ENCODE measurements at regions of chr16 and their contacts with region 1.

Region 1: DNA sequence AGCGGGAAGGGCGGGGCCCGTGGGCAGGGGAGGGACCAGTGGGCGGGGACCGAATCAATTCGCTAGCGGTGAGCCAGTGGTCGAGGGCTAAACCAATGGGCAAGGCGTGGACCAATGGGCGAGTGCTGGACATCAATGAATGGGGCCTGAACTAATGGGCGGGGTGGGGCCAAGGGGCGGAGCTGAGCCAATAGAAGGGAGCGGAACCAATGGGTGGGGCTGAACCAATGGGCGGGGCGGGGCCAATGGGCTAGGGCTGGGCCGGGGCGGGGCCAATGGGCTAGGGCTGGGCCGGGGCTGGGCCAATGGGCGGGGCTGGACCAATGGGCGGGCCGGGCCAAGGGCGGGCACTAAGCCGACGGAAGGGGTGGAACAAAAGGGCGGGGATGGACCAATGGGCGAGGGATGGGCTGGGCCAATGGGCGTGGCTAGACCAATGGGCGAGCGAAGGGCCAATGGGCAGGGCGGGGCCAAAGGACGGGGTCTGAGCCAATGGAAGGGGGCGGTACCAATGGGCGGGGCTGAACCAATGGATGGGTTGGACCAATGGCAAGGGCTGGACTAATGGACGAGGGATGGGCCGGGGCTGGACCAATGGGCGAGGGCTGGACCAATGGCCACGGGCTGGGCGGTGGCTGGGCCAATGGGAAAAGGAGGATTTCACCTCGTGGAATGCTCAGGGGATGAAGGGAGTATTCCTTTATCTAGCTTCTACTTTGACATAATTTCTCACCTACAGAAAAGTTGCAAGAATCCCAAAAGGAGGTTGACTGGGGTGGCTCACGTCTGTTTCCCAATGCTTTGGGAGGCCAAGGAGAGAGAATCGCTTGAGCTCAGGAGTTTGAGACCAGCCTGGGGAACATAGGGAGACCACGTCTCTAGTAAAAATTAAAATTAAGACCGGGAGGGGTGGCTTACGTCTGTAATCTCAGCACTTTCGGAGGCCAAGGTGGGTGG is 6.0 kb upstream of the FLYWCH1 start:
- DNase-seq: peak; percentile 100
- ATAC-seq: peak; percentile 81
- H3K4me3 Mint-ChIP-seq: peak overlapping the region; percentile 94
- H3K27ac Mint-ChIP-seq: peak overlapping the region; percentile 8
- H3K4me1 Mint-ChIP-seq: peaks cover 19% of the 10 kb centered on the region
- H3K27me3 Mint-ChIP-seq: no peaks in the 10 kb centered on the region

Region 2: DNA sequence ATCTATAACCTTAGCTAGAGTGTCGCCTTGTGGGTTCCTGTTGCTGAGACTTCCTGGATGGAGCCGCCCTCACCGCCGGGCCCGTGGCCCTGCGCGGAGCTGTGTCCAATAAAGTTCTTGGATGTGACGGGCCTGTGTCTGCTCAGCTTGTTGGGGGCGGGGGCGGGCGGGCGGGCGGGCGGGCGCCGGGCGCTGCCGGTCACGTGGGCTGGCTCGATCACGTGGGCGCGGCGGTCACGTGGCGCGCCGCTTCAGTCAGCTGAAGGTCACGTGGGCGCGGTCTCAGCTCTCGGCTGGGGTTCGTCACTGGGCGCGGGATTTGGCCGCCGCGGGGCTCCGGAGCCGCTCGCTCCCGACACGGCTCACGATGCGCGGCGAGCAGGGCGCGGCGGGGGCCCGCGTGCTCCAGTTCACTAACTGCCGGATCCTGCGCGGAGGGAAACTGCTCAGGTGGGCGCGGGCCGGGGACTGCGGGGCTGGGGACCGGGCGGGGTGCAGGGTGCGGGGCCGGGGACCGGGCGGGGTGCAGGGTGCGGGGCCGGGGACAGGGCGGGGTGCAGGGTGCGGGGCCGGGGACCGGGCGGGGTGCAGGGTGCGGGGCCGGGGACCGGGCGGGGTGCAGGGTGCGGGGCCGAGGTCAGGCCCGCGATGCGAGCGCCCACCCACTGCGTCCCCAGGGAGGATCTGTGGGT is 385.5 kb before region 1 on chr16 and contains the start of gene AMDHD2:
- CTCF ChIA-PET with region 1: no interaction called
- POLR2A ChIA-PET with region 1: no interaction called
- intact Hi-C with region 1: no loop called
- DNase-seq: peak; percentile 95
- ATAC-seq: peak; percentile 77
- H3K4me3 Mint-ChIP-seq: peak within 1 kb of the TSS; percentile 80
- H3K27ac Mint-ChIP-seq: peak within 1 kb of the TSS; percentile 89
- H3K4me1 Mint-ChIP-seq: peaks cover 52% of the 10 kb centered on the region
- H3K27me3 Mint-ChIP-seq: no peaks in the 10 kb centered on the region
- total RNA-seq, gene AMDHD2: 20.9 to 31.6 TPM

Region 3: GRCh38 chr16:2777231-2777902 is 128.3 kb before region 1 on chr16 and contains the start of gene ELOB:
- CTCF ChIA-PET with region 1: no interaction called
- POLR2A ChIA-PET with region 1: no interaction called
- intact Hi-C with region 1: loop called in 1 of 2 experiments (anchors 2 kb)
- DNase-seq: peak; percentile 95
- ATAC-seq: peak; percentile 94
- H3K4me3 Mint-ChIP-seq: peak within 1 kb of the TSS; percentile 95
- H3K27ac Mint-ChIP-seq: peak within 1 kb of the TSS; percentile 96
- H3K4me1 Mint-ChIP-seq: peaks cover 26% of the 10 kb centered on the region
- H3K27me3 Mint-ChIP-seq: no peaks in the 10 kb centered on the region
- total RNA-seq, gene ELOB: 268 to 269 TPM

Region 4: DNA sequence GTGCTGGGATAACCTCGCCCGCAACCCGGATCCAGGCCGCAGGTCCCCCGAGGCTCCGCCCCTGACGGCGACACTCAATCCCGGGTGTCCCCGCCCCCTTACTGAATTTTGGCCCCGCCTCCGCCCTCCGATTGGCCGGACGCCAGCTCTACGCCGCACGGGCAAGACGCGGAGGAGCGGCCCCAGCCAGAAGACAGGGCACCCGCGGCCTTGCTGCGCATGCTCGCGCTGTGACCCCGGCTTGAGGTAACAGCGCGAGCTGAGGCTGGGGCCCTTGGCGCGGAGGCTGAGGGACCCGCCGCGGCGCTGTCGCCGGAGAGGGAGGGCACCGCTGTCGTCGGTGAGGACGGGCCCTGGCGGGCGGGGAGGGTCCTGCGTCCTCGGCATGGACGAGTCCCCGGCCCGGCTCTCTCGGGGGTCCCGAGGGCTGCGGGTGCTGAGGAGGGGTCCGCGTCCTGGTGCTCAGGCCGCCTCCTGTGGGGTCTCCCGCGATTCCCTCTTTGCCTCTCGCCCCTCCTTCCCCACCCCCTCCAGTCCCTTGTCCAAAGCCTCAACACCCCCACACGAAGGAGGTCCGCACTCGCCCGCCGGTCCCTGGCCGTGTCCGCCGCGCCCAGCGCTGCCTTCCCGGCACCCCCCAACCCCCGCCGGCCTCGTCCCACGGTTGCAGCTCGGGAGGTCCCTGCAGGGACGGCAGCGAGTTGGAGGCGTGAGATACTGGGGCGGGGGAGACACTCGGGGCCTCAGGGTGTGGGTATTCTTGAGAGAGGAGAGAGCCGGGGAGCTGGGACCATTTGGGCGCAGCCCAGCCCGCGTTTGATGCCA is 22.5 kb before region 1 on chr16 and contains the start of gene FLYWCH2:
- CTCF ChIA-PET with region 1: interaction called, 14 read pairs
- POLR2A ChIA-PET with region 1: no interaction called
- intact Hi-C with region 1: loop called (anchors 1 kb)
- DNase-seq: peak; percentile 99
- ATAC-seq: peak; percentile 84
- H3K4me3 Mint-ChIP-seq: peak within 1 kb of the TSS; percentile 85
- H3K27ac Mint-ChIP-seq: peak within 1 kb of the TSS; percentile 92
- H3K4me1 Mint-ChIP-seq: peaks cover 10% of the 10 kb centered on the region
- H3K27me3 Mint-ChIP-seq: no peaks in the 10 kb centered on the region
- total RNA-seq, gene FLYWCH2: 16.8 to 17.3 TPM

Region 5: GRCh38 chr16:2926650-2927646 is 21.2 kb after region 1 on chr16:
- CTCF ChIA-PET with region 1: interaction called, 11 read pairs
- POLR2A ChIA-PET with region 1: no interaction called
- intact Hi-C with region 1: loop called (anchors 1 to 2 kb)
- DNase-seq: peak; percentile 93
- ATAC-seq: peak; percentile 99
- H3K4me3 Mint-ChIP-seq: no peak overlapping the region
- H3K27ac Mint-ChIP-seq: no peak overlapping the region
- H3K4me1 Mint-ChIP-seq: peaks cover 11% of the 10 kb centered on the region
- H3K27me3 Mint-ChIP-seq: no peaks in the 10 kb centered on the region

Region 6: DNA sequence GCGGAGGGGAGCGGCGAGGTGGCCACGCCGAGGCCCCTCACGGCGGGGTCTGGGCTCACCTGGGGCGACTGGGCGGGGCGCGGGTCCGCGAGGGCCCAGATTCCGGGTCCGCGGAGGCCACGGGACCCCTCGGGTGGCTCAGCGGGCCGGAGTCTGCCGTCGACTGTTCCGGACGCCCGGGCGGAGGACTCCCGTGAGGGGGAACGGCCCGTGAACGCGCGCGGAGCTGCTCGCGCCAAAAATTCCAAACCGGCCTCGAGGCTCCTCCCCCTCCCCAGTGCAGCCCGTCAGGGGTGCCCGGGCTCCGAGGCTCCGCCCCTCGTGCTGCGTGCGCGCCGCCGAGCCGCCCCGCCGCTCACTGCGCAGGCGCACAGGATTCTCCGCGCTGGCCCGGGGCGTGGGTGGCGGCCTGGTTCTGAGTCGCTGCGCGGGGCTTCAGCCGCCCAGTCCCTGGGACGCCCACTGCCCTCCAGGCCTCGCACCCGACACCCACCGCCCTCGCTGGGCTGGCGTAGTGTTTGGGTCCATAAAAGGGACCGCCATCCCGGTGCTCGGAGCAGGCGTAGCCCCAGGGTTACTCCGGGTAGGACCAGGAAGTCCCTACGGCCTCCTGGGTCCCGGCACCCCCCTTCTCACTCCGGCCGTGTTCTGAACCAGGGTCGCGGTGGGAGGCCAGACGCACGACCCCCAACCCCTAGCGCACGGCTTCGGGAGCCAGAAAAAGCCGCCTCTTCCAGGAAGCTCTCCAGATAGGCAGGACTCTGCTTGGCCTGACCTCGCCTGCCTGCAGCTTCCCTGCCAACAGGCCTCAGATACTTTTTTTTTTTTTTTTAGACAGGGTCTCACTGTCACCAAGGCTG is 74.7 kb after region 1 on chr16 and contains the start of gene PKMYT1:
- CTCF ChIA-PET with region 1: no interaction called
- POLR2A ChIA-PET with region 1: interaction called, 3 read pairs
- intact Hi-C with region 1: loop called in 1 of 2 experiments (anchors 1 kb)
- DNase-seq: peak; percentile 97
- ATAC-seq: peak; percentile 91
- H3K4me3 Mint-ChIP-seq: peak within 1 kb of the TSS; percentile 87
- H3K27ac Mint-ChIP-seq: peak within 1 kb of the TSS; percentile 84
- H3K4me1 Mint-ChIP-seq: peaks cover 6% of the 10 kb centered on the region
- H3K27me3 Mint-ChIP-seq: peaks cover 2% of the 10 kb centered on the region
- total RNA-seq, gene PKMYT1: 101 to 117 TPM

Region 7: DNA sequence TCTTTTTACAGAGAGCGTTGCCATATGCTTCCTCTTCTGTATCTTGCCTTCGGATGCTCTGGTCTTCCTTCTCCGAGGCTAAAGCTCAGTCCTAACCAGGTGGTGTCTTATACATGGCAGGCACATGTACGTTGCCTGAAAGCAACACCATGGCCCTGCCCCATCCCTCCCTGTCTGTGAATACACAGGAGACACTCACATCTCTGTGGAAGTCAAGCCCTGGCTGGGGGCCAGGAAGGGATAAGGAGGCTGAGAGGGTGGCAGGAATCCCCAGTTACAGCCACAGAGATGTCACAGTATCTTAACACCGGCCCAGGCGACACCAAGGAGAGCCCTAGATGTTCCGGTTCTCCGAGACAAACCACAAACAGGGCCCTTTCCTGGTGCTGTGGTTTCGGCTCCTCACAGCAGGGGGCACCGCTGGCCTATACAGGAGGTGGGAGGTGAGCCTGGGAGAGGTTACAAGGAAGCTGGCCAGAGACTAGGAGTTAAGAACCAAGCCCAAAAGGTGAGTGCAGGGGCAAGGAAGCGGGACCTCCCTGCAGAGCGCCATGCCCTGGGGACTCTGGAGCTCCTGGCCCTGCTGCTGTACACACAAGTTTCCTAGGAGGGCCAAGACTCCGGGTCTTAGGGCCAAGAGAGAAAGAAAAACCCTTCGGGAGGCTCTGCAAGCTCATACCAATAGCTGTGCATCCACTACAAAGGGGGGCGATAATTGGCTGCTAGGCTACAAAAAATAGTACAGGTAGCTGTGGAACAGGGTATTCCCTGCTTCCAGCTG is 1294.5 kb after region 1 on chr16:
- CTCF ChIA-PET with region 1: no interaction called
- POLR2A ChIA-PET with region 1: no interaction called
- intact Hi-C with region 1: no loop called
- DNase-seq: peak; percentile 53
- ATAC-seq: peak; percentile 55
- H3K4me3 Mint-ChIP-seq: no peak overlapping the region
- H3K27ac Mint-ChIP-seq: no peak overlapping the region
- H3K4me1 Mint-ChIP-seq: peaks cover 3% of the 10 kb centered on the region
- H3K27me3 Mint-ChIP-seq: peaks cover 4% of the 10 kb centered on the region

Measured in activated CD4-positive, alpha-beta T cell treated with anti-CD3 and anti-CD28 coated beads for 36 hours (primary cell).